ENCODE measurements at regions of chr2 and their contacts with region 1.

Region 1: GRCh38 chr2:227884511-227884947 is 13.1 kb downstream of the DAW1 start:
- DNase-seq: peak; percentile 90
- H3K4me3 Mint-ChIP-seq: no peak overlapping the region
- H3K27ac Mint-ChIP-seq: peak overlapping the region; percentile 58
- H3K4me1 Mint-ChIP-seq: peaks cover 46% of the 10 kb centered on the region
- H3K27me3 Mint-ChIP-seq: no peaks in the 10 kb centered on the region
- CTCF ChIP-seq: peak; percentile 93

Region 2: DNA sequence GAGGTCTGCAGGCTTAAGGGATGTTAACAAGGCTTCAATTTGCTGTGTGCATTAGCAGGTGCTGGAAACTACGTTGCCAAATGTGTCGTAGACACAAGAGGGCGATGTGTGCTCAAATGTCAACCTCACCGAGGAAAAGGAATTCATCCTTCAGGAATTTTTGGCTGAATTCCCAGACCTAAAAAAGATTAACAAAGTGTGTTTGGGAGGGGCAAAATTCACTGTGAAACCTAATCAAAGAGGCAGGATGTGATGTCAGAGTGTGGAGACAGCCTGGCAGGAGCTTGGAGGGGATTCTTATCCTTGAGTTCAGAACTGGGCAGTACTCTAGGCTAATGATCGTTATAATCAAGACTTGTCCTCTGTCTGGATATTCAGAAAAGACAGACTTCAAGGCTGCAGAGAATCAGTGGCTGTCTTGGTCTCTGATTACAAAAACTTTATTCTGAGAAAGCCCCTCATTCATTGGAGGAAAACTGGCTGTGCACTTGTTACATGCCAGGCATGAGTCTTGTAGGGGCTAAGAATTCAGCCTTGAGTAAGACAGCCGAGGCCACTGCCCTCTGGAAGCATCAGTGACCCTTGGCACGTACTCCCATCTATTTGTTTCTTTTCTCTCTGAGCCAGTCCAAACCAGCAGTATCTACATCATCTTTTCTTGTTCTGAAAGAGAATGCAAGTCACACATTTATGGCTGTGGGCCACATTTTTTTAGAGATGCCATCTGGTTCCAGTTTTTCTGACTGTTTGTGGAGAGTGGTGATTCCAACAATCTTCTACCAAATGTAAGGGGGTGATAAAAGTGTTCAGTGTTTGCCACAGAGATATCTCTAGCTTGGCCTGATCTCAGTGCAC is 478.1 kb before region 1 on chr2:
- CTCF ChIA-PET with region 1: no interaction called
- intact Hi-C with region 1: loop called (anchors 2 kb)
- DNase-seq: peak; percentile 78
- H3K4me3 Mint-ChIP-seq: no peak overlapping the region
- H3K27ac Mint-ChIP-seq: peak overlapping the region; percentile 86
- H3K4me1 Mint-ChIP-seq: peaks cover 50% of the 10 kb centered on the region
- H3K27me3 Mint-ChIP-seq: no peaks in the 10 kb centered on the region
- CTCF ChIP-seq: peak; percentile 69

Region 3: DNA sequence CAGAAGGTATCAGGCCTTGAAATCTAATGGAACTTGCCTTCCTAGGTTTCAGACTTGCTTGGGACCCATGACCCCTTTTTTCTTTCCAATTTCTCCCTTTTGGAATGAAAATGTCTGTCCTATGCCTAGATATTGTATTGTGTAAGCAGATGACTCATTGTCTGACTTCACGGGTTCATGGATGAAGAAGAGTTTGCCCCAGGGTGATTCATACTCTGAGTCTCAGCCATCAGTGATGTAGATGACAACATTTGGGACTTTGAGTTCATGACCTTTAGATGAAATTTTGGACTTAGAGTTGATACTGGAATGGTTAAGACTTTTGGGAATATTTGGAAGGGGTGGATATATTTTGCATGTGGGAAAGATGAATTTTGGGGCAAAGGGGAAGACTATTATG is 229.1 kb before region 1 on chr2:
- CTCF ChIA-PET with region 1: no interaction called
- intact Hi-C with region 1: loop called (anchors 2 kb)
- DNase-seq: peak; percentile 9
- H3K4me3 Mint-ChIP-seq: no peak overlapping the region
- H3K27ac Mint-ChIP-seq: peak overlapping the region; percentile 14
- H3K4me1 Mint-ChIP-seq: peaks cover 25% of the 10 kb centered on the region
- H3K27me3 Mint-ChIP-seq: no peaks in the 10 kb centered on the region
- CTCF ChIP-seq: no peak

Region 4: DNA sequence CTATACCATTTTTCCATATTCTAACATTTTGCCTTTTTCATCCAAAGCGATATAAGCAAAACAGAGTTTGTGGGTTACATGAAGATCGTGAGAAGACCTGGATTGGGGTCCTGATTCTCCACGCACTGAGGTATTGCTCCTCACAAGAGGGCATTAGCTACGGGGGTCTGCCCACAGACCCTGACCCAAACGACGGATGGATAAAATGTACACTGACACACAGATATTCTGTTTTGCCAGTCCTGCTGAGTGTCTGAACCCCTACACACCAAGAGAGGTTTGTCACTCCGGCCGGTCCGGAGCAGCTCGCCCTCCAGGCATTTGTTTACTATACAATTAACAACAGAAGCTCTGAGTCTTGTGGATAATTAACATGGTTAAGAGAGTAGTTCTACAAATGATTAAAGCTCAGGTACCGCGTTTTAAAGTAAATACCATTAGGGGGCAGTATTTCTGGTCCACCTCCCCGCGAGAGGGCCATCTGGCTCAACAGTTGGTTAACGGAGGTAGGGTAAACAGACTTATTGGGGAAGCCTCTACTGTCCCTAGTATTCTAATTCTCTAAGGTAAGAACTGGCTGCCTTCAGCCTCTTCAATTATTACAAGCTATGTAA is 110.4 kb before region 1 on chr2:
- CTCF ChIA-PET with region 1: no interaction called
- intact Hi-C with region 1: loop called (anchors 2 kb)
- DNase-seq: peak; percentile 36
- H3K4me3 Mint-ChIP-seq: no peak overlapping the region
- H3K27ac Mint-ChIP-seq: no peak overlapping the region
- H3K4me1 Mint-ChIP-seq: peaks cover 38% of the 10 kb centered on the region
- H3K27me3 Mint-ChIP-seq: no peaks in the 10 kb centered on the region
- CTCF ChIP-seq: peak; percentile 65

Region 5: DNA sequence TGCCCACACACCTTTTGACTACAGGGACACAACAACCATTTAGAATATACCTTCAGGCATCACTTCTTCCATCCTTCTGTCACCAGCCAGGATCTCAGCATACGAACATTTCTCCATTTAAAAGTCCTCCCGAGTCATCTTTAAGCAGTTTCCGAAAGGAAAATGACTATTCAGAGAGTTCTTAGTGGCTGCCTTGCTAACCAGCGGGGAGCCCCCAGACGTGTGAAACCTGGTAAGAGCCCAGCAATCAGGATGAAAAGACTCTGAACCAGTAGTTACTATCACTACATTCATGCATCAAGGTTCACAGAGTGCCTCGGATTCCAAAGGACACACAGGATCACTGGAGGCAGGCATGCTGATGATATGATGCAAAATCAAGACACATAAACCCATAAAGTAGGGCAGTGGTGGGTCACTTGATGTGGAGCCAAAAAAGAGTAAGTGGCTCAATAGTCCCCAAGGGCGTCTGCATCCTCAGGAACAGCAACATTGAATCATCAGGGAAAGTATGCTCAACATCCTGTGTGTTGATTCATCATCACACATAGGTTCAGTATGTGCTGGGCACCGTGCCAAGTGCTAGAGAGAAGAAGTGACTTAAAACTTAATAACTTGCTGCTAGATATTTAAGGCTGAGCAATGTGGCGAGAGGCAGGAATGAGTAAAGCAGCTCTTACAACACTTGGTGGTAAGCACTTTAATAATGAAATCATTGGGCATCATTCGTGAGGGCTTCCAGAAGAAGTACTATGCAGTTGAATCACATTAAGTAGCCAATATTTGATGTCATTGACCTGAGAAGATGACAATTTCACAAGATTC is 66.5 kb before region 1 on chr2:
- CTCF ChIA-PET with region 1: no interaction called
- intact Hi-C with region 1: loop called (anchors 2 kb)
- DNase-seq: peak; percentile 94
- H3K4me3 Mint-ChIP-seq: peak overlapping the region; percentile 72
- H3K27ac Mint-ChIP-seq: peak overlapping the region; percentile 98
- H3K4me1 Mint-ChIP-seq: peaks cover 61% of the 10 kb centered on the region
- H3K27me3 Mint-ChIP-seq: peaks cover 9% of the 10 kb centered on the region
- CTCF ChIP-seq: no peak

Region 6: DNA sequence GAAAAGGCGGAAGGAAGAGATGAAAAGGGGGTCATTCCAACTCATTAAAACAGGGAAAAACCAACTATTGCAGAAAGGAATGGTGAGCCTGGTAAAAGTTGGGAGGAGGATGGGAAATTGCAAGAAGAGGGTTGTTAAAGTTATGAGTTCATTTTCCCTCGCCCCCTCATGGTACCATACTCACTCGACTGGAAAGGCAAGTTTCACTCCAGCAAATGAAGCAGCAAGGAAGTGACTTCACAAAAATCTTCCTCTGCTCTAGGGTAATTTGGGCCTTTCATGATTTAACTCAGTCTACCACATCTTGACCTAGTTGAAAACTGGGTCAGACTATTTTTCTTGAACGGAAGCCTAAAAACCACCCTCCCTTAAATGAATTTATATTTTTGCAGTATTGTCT is 35.9 kb before region 1 on chr2:
- CTCF ChIA-PET with region 1: no interaction called
- intact Hi-C with region 1: no loop called
- DNase-seq: peak; percentile 57
- H3K4me3 Mint-ChIP-seq: peak overlapping the region; percentile 5
- H3K27ac Mint-ChIP-seq: peak overlapping the region; percentile 53
- H3K4me1 Mint-ChIP-seq: peaks cover 50% of the 10 kb centered on the region
- H3K27me3 Mint-ChIP-seq: no peaks in the 10 kb centered on the region
- CTCF ChIP-seq: no peak